CD4-positive, alpha-beta T cell (primary cell): ENCODE measurements at regions of chr17 and their contacts with region 1.

Region 1: DNA sequence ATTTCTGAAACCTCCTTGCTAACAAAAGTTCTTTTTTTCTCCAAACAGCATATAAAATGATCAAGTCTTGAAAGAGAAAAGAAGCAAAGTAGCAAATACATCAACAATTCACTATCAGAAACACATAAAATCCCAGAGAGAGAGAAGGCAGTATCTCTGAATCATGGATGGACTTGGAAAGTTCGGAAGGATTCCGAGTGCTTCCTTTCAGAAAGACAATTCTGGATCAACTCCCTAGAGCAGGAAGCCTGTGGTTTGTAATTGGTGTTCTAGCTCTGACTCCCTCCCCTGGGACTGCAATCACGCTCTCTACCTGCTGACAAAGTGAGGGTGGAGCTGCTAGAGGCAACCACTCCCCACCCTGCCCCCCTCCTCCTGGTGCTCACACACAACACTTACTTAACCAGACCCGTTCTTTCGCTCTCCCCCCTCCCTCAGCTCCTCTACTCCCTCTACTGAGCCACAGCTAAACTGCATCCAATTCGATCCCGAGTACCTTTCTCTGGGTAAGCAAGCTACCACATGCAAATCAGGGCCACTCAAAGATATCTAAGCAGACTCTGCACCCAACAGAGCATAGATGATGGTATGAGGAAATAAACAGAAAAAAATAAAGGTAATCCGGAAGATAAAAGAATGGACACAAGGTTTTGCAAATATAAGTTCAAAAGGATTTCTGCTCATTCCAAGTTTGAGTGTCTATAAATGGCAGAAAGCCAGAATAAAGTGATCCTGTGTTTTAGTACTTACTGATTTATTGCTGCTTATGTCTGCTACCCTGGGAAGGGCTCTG is at the start of gene RNF43:
- DNase-seq: peak; percentile 75 to 96 (median 86)
- ATAC-seq: peak; percentile 100
- H3K4me3 ChIP-seq: no peak within 1 kb of the TSS
- H3K4me3 Mint-ChIP-seq: no peak within 1 kb of the TSS
- H3K27ac ChIP-seq: no peak within 1 kb of the TSS
- H3K27ac Mint-ChIP-seq: peak within 1 kb of the TSS; percentile 8
- H3K4me1 ChIP-seq: peaks cover 7% of the 10 kb centered on the region
- H3K4me1 Mint-ChIP-seq: peaks cover 15% of the 10 kb centered on the region
- H3K27me3 ChIP-seq: no peaks in the 10 kb centered on the region
- H3K27me3 Mint-ChIP-seq: no peaks in the 10 kb centered on the region
- CTCF ChIP-seq: peak; percentile 72
- total RNA-seq, gene RNF43: 0.69 to 1.9 TPM

Region 2: DNA sequence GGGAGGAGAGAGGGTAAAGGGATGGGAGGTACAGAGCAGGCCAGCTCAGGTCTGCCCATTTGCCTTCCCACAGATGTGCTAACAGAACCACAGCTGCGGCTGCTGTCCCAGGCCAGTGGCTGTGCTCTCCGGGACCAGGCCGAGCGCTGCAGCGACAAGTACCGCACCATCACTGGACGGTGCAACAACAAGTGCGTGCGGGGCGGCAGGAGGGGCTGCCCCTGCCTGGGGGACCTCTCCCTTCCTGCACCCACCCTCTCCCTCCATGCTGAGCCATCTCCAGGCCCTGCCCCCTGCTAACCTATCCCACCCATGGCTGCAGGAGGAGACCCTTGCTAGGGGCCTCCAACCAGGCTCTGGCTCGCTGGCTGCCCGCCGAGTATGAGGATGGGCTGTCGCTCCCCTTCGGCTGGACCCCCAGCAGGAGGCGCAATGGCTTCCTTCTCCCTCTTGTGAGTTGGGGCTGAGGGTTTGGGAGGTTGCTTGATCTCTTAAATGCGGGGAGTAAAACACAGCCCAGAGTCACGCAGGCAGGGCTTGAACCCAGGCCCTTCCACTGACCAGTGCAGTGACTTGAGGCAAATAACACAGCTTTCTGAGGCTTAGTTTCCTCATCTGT is 223.7 kb before region 1 on chr17:
- CTCF ChIA-PET with region 1: no interaction called
- POLR2A ChIA-PET with region 1: no interaction called
- intact Hi-C with region 1: no loop called
- DNase-seq: no peak
- ATAC-seq: no peak
- H3K4me3 ChIP-seq: no peak overlapping the region
- H3K4me3 Mint-ChIP-seq: no peak overlapping the region
- H3K27ac ChIP-seq: no peak overlapping the region
- H3K27ac Mint-ChIP-seq: no peak overlapping the region
- H3K4me1 ChIP-seq: no peaks in the 10 kb centered on the region
- H3K4me1 Mint-ChIP-seq: no peaks in the 10 kb centered on the region
- H3K27me3 ChIP-seq: peaks cover 8 to 15% of the 10 kb centered on the region in 2 experiments
- H3K27me3 Mint-ChIP-seq: peaks cover 18% of the 10 kb centered on the region
- CTCF ChIP-seq: no peak

Region 3: DNA sequence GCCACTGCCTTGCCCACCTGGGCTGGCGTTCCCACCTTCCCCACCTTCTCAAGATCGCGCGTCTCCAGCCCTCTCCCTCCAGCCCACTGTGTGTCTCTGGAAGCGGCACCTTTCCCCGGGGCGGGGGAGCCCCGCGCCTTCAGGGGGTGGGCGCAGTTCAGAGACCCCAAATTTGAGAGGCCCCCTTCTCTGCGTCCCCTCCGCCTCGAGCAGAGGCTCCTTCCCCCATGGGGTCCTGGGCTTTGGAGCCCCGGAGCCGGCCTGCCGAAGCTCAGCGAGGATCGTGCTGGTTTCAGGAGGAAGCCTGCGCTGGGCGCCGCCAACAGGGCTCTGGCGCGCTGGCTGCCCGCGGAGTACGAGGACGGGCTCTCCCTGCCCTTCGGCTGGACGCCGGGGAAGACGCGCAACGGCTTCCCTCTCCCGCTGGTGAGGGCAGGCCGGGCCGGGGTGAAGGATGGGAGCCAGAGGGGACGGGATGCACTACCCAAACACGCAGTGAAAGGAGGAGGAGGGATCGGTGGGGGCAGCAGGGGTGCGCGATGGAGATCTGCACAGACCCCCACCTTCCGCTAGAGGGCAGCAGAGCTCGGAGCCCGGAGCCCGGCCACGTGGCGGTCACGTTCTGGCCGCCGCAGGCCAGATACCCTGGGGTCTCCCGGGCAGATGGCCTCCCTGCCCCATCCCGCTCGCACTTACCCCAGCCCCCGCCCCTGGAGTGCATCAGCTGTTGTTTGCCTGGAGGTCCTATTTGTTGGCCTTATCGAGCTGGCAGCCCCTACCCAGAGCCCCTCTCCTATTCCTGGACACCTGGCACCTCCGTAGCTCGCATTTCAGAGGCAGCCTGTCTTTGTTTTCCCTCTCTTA is 168.0 kb before region 1 on chr17:
- CTCF ChIA-PET with region 1: interaction called, 9 read pairs
- POLR2A ChIA-PET with region 1: no interaction called
- intact Hi-C with region 1: loop called in 1 of 2 experiments (anchors 5 kb)
- DNase-seq: peak; percentile 54 to 86 (median 66)
- ATAC-seq: peak; percentile 95
- H3K4me3 ChIP-seq: peak overlapping the region; percentile 56
- H3K4me3 Mint-ChIP-seq: peak overlapping the region; percentile 74
- H3K27ac ChIP-seq: no peak overlapping the region
- H3K27ac Mint-ChIP-seq: no peak overlapping the region
- H3K4me1 ChIP-seq: peaks cover 18% of the 10 kb centered on the region
- H3K4me1 Mint-ChIP-seq: peaks cover 11% of the 10 kb centered on the region
- H3K27me3 ChIP-seq: peaks cover 5 to 8% of the 10 kb centered on the region in 2 experiments
- H3K27me3 Mint-ChIP-seq: peaks cover 34% of the 10 kb centered on the region
- CTCF ChIP-seq: peak; percentile 98

Region 4: GRCh38 chr17:58329035-58329809 is 88.3 kb before region 1 on chr17:
- CTCF ChIA-PET with region 1: interaction called, 8 read pairs
- POLR2A ChIA-PET with region 1: interaction called, 32 read pairs
- intact Hi-C with region 1: no loop called
- DNase-seq: peak; percentile 47 to 87 (median 72)
- ATAC-seq: peak; percentile 39
- H3K4me3 ChIP-seq: peak overlapping the region; percentile 84
- H3K4me3 Mint-ChIP-seq: peak overlapping the region; percentile 90
- H3K27ac ChIP-seq: peak overlapping the region; percentile 84 to 87
- H3K27ac Mint-ChIP-seq: peak overlapping the region; percentile 84
- H3K4me1 ChIP-seq: peaks cover 62% of the 10 kb centered on the region
- H3K4me1 Mint-ChIP-seq: peaks cover 53% of the 10 kb centered on the region
- H3K27me3 ChIP-seq: no peaks in the 10 kb centered on the region
- H3K27me3 Mint-ChIP-seq: no peaks in the 10 kb centered on the region
- CTCF ChIP-seq: peak; percentile 83

Region 5: DNA sequence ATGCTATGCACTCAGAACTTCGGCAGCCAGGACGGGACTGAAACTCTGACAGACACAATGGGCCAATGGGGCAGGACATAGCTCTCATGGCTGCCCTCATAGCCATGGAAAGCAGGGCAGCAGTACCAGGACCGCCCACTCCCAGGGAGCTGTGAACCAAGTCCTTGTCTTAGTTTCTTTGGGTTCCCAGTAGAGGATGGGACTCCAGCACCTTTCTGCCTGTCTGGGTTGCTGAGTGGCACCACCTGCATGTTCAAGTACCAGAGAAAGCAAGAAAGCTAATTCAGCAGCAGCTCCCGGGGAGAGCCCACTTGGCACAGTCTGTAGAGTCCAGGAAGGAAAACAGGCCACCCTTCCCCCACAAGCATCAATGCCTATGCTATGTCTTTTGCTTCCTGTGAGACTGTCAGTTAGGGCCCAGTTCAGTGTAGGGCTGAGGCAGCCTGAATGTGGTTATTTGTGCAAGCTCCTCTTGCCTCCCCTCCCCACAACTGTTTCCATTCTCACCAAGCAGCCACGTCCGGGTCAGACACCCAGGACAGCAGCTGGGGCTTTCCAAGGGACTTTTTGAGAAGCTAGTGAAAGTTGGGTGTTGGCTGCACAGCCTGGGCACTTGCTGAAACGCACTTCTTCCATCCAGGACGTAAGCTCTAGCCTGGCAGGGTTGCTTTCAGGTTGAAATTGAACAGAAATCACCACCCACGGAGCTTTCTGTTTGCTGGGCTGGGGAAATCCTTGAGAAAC is 73.3 kb before region 1 on chr17:
- CTCF ChIA-PET with region 1: interaction called, 34 read pairs
- POLR2A ChIA-PET with region 1: interaction called, 35 read pairs
- intact Hi-C with region 1: loop called in 1 of 2 experiments (anchors 2 kb)
- DNase-seq: peak in 13 of 14 experiments; percentile 56 to 97 (median 77)
- ATAC-seq: peak; percentile 71
- H3K4me3 ChIP-seq: peak overlapping the region; percentile 67
- H3K4me3 Mint-ChIP-seq: peak overlapping the region; percentile 84
- H3K27ac ChIP-seq: peak overlapping the region; percentile 97 to 98
- H3K27ac Mint-ChIP-seq: peak overlapping the region; percentile 84
- H3K4me1 ChIP-seq: peaks cover 86% of the 10 kb centered on the region
- H3K4me1 Mint-ChIP-seq: peaks cover 99% of the 10 kb centered on the region
- H3K27me3 ChIP-seq: no peaks in the 10 kb centered on the region
- H3K27me3 Mint-ChIP-seq: no peaks in the 10 kb centered on the region
- CTCF ChIP-seq: no peak

Region 6: DNA sequence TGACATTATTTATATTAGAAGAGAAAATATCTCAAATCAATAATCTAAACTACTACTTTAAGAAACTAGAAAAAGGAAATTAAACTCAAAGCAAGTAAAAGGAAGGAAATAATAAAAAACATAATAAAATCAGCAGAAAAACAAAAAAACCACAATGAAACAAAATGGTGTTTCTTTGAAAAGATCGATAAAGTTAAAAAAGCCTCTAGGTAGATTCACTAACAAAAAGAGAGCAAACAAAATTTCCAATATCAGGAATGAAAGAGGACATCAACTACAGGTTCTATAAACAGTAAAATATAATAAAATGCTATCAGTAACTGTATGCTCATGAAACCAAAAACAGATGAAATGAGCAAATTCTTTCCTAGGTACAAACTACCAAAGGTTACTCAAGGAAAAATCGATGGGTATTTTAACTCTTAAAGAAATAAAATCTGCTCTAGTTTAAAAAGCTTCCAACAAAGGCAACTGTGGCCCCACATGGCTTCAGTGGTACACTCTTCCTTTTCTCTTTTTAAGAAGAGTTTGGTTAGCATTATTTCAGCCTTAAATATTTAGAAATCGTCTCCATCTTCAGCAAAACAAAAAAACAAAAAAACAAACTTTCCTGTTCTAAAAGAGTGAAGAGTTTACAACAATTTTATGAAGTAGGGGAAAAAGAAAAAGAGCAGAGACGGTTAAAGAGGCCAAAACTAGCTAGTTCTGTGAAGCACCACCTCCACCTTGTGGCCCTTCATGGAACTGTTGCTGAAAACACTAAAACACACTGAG is 587.0 kb after region 1 on chr17:
- CTCF ChIA-PET with region 1: no interaction called
- POLR2A ChIA-PET with region 1: no interaction called
- intact Hi-C with region 1: loop called in 1 of 2 experiments (anchors 2 kb)
- DNase-seq: peak; percentile 49 to 84 (median 66)
- ATAC-seq: peak; percentile 57
- H3K4me3 ChIP-seq: no peak overlapping the region
- H3K4me3 Mint-ChIP-seq: peak overlapping the region; percentile 45
- H3K27ac ChIP-seq: no peak overlapping the region
- H3K27ac Mint-ChIP-seq: peak overlapping the region; percentile 81
- H3K4me1 ChIP-seq: peaks cover 9% of the 10 kb centered on the region
- H3K4me1 Mint-ChIP-seq: peaks cover 12% of the 10 kb centered on the region
- H3K27me3 ChIP-seq: no peaks in the 10 kb centered on the region
- H3K27me3 Mint-ChIP-seq: no peaks in the 10 kb centered on the region
- CTCF ChIP-seq: peak; percentile 95